Naive thymus-derived CD4-positive, alpha-beta T cell (primary cell): ENCODE measurements at regions of chr1 and their contacts with region 1.

Region 1: GRCh38 chr1:24391882-24392603 is 21.5 kb downstream of the STPG1 start:
- DNase-seq: peak in 8 of 9 donors; percentile 29 to 60 (median 47)
- ATAC-seq: peak; percentile 81
- H3K4me3 ChIP-seq: peak overlapping the region; percentile 35
- H3K4me3 Mint-ChIP-seq: peak overlapping the region in 9 of 10 donors; percentile 18 to 77 (median 66)
- H3K27ac ChIP-seq: peak overlapping the region; percentile 60
- H3K27ac Mint-ChIP-seq: peak overlapping the region; percentile 76 to 97 (median 94)
- H3K4me1 ChIP-seq: peaks cover 12 to 29% of the 10 kb centered on the region in 2 donors
- H3K4me1 Mint-ChIP-seq: peaks cover 26 to 45% (median 40%) of the 10 kb centered on the region in 7 donors
- H3K27me3 ChIP-seq: no peaks in the 10 kb centered on the region
- H3K27me3 Mint-ChIP-seq: no peaks in the 10 kb centered on the region

Region 2: GRCh38 chr1:24150234-24151174 is 241.5 kb before region 1 on chr1:
- CTCF ChIA-PET with region 1: interaction called, 30 read pairs
- POLR2A ChIA-PET with region 1: no interaction called
- intact Hi-C with region 1: loop called (anchors 1 kb)
- DNase-seq: peak; percentile 56 to 89 (median 77)
- ATAC-seq: peak; percentile 96
- H3K4me3 ChIP-seq: peak overlapping the region; percentile 34
- H3K4me3 Mint-ChIP-seq: peak overlapping the region; percentile 32 to 82 (median 71)
- H3K27ac ChIP-seq: no peak overlapping the region
- H3K27ac Mint-ChIP-seq: peak overlapping the region in 2 of 9 donors; percentile 54 to 61
- H3K4me1 ChIP-seq: peaks cover 4 to 10% of the 10 kb centered on the region in 2 donors
- H3K4me1 Mint-ChIP-seq: peaks cover 9 to 18% (median 14%) of the 10 kb centered on the region in 7 donors
- H3K27me3 ChIP-seq: no peaks in the 10 kb centered on the region
- H3K27me3 Mint-ChIP-seq: peaks cover 27 to 51% (median 39%) of the 10 kb centered on the region in 5 donors

Region 3: GRCh38 chr1:24201941-24202440 is 190.1 kb before region 1 on chr1:
- CTCF ChIA-PET with region 1: interaction called, 253 read pairs
- POLR2A ChIA-PET with region 1: interaction called, 9 read pairs
- intact Hi-C with region 1: loop called (anchors 1 kb)
- DNase-seq: peak in 7 of 9 donors; percentile 29 to 54 (median 42)
- ATAC-seq: peak; percentile 53
- H3K4me3 ChIP-seq: no peak overlapping the region
- H3K4me3 Mint-ChIP-seq: no peak overlapping the region
- H3K27ac ChIP-seq: no peak overlapping the region
- H3K27ac Mint-ChIP-seq: no peak overlapping the region
- H3K4me1 ChIP-seq: peaks cover 0 to 4% of the 10 kb centered on the region in 2 donors
- H3K4me1 Mint-ChIP-seq: peaks cover 0 to 16% (median 5%) of the 10 kb centered on the region in 7 donors
- H3K27me3 ChIP-seq: no peaks in the 10 kb centered on the region
- H3K27me3 Mint-ChIP-seq: peaks cover 0 to 5% (median 0%) of the 10 kb centered on the region in 5 donors

Region 4: GRCh38 chr1:24329797-24330543 is 62.1 kb before region 1 on chr1:
- CTCF ChIA-PET with region 1: no interaction called
- POLR2A ChIA-PET with region 1: no interaction called
- intact Hi-C with region 1: no loop called
- DNase-seq: no peak
- ATAC-seq: no peak
- H3K4me3 ChIP-seq: no peak overlapping the region
- H3K4me3 Mint-ChIP-seq: no peak overlapping the region
- H3K27ac ChIP-seq: no peak overlapping the region
- H3K27ac Mint-ChIP-seq: no peak overlapping the region
- H3K4me1 ChIP-seq: no peaks in the 10 kb centered on the region
- H3K4me1 Mint-ChIP-seq: peaks cover 0 to 2% (median 0%) of the 10 kb centered on the region in 7 donors
- H3K27me3 ChIP-seq: no peaks in the 10 kb centered on the region
- H3K27me3 Mint-ChIP-seq: peaks cover 0 to 85% (median 4%) of the 10 kb centered on the region in 5 donors

Region 5: DNA sequence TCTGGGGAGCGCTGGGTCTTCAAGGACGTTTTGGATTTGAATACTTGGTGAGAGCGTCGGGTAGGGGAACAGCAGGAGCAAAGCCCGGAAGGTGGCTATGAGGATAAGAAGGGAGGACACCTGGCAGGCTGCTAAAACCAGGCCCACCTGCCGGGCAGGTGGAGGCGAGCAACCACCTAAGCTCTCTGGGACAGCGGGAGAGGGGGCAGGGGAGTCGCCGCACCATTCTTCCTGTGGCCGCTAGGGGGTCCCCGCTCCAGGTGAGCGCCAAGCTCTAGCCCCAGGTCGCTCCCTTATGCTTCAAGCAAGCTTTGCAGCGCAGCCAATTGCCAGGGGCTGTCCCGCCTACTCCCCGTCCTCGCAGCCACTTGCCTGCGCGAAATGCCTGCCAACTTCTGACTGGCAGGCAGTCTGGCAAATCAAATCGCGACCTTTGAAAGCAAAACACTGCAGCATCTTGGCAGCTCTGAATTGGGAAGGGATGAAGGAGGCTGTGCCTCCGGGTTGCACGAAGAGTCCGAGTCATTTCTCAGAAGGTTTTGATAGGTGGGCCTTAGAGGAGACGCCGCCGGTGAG is 23.4 kb after region 1 on chr1 and contains the start of gene NIPAL3:
- CTCF ChIA-PET with region 1: interaction called, 15 read pairs
- POLR2A ChIA-PET with region 1: interaction called, 7 read pairs
- intact Hi-C with region 1: loop called (anchors 1 kb)
- DNase-seq: peak; percentile 81 to 99 (median 97)
- ATAC-seq: peak; percentile 98
- H3K4me3 ChIP-seq: peak within 1 kb of the TSS; percentile 76
- H3K4me3 Mint-ChIP-seq: peak within 1 kb of the TSS; percentile 95 to 100 (median 98)
- H3K27ac ChIP-seq: peak within 1 kb of the TSS; percentile 74
- H3K27ac Mint-ChIP-seq: peak within 1 kb of the TSS; percentile 75 to 99 (median 90)
- H3K4me1 ChIP-seq: peaks cover 23 to 44% of the 10 kb centered on the region in 2 donors
- H3K4me1 Mint-ChIP-seq: peaks cover 51 to 91% (median 75%) of the 10 kb centered on the region in 7 donors
- H3K27me3 ChIP-seq: no peaks in the 10 kb centered on the region
- H3K27me3 Mint-ChIP-seq: no peaks in the 10 kb centered on the region
- total RNA-seq, gene NIPAL3: 35.5 to 65.0 (median 54.5) TPM

Region 6: DNA sequence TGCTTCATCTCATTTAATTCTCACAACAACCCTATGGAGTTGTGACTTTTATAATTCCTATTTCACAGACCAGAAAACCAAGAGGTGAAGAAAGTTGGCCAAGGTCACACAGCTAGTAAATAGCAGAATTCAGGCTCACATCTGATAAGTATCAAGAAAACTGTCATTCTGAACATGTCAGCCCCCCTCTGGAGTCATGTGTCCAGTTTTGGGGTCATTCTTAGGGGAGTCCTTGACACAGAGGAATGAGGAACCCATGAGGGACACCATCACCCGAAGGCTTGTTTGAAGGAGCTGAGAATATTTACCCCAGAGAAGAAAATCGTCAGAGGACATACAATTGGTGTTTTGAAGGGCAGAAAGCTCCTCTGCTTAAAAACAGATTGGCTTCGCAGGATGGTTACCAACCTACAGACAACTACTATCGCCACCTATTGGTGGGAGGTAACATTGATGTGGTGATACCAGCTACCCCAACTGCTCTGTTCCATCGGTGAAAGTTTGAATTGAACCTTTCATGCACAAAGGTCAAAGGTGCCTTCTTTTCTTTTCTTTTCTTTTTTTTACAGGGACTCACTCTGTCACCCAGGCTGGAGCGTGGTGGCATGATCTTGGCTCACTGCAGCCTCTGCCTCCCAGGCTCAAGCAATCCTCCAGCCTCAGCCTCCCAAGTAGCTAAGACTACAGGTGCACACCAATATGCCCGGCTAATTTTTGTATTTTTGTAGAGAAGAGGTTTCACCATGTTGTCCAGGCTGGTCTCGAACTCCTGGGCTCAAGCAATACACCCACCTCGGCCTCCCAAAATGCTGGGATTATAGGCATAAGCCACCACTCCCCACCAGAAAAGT is 195.2 kb after region 1 on chr1:
- CTCF ChIA-PET with region 1: interaction called, 55 read pairs
- POLR2A ChIA-PET with region 1: interaction called, 9 read pairs
- intact Hi-C with region 1: loop called (anchors 1 to 2 kb)
- DNase-seq: peak in 8 of 9 donors; percentile 32 to 83 (median 76)
- ATAC-seq: peak; percentile 98
- H3K4me3 ChIP-seq: no peak overlapping the region
- H3K4me3 Mint-ChIP-seq: peak overlapping the region in 4 of 10 donors; percentile 12 to 38 (median 35)
- H3K27ac ChIP-seq: peak overlapping the region; percentile 35
- H3K27ac Mint-ChIP-seq: peak overlapping the region in 8 of 9 donors; percentile 78 to 93 (median 85)
- H3K4me1 ChIP-seq: peaks cover 0 to 7% of the 10 kb centered on the region in 2 donors
- H3K4me1 Mint-ChIP-seq: peaks cover 0 to 9% (median 7%) of the 10 kb centered on the region in 7 donors
- H3K27me3 ChIP-seq: no peaks in the 10 kb centered on the region
- H3K27me3 Mint-ChIP-seq: peaks cover 0 to 14% (median 0%) of the 10 kb centered on the region in 5 donors

Region 7: DNA sequence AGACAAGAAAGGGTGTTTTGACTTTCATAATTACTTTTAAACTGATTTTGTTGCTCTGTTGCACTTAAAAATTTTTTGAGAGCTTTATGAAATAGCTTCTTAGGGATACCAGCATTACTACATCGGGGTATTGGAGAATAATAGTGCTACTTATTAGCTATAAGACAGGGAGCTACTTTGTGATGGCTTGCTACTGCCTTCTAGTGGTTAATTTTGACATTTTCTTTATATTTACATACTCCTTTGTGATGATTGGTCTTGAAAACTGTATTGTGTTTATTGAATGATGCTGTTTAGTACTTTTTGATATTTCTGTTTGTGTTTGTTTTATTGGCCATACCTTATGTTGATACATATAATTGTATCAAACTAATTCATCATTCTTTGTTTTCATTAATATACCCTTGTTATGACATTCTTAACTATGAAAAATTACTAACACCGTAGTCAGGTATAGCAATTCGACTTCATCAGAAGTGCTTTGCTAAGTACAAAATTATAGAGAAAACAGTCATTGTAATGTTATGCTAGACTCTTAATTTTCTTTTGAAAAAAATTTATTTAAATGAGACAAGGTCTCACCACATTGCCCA is 438.7 kb after region 1 on chr1:
- CTCF ChIA-PET with region 1: interaction called, 5 read pairs
- POLR2A ChIA-PET with region 1: no interaction called
- intact Hi-C with region 1: loop called in 1 of 2 experiments (anchors 2 kb)
- DNase-seq: peak in 7 of 9 donors; percentile 17 to 54 (median 48)
- ATAC-seq: peak; percentile 67
- H3K4me3 ChIP-seq: no peak overlapping the region
- H3K4me3 Mint-ChIP-seq: no peak overlapping the region
- H3K27ac ChIP-seq: no peak overlapping the region
- H3K27ac Mint-ChIP-seq: no peak overlapping the region
- H3K4me1 ChIP-seq: no peaks in the 10 kb centered on the region
- H3K4me1 Mint-ChIP-seq: peaks cover 0 to 7% (median 0%) of the 10 kb centered on the region in 7 donors
- H3K27me3 ChIP-seq: no peaks in the 10 kb centered on the region
- H3K27me3 Mint-ChIP-seq: peaks cover 0 to 5% (median 0%) of the 10 kb centered on the region in 5 donors